PC-3 (cell line): ENCODE measurements at regions of chr1 and their contacts with region 1.

Region 1: DNA sequence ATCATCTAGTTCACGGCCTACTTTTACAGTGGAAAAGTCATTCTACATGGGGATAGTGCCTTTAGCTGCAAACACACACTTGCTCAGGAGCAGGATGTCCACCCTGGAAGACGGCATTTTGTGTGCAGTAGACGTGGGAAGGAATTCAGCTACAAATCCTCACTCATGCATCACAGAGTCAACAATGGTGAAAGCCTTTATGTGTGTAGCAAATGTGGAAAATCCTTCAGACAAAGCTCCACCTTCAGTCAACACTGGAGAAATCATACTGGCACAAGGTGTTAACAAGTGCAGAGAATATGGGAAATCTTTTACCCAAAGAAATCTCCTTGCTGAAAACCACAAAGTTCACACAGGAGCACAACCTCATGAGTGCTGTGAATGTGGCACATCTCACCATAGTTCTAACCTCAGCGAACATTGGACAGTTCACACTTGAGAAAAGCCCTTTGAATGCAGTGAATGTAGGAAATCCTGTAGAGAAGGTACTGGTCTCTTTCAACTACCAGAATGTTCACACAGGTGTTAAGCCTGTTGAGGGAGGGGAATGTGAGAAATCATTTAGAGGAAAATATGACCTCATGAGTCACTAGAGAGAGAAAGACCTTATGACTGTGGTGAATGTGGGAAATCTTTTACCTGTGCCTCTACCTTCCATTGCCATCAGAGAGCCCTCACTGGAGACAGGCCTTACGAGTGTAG is 101.8 kb downstream of the PTGS2 start:
- DNase-seq: peak; percentile 66
- ATAC-seq: peak; percentile 89
- H3K4me3 ChIP-seq: no peak overlapping the region
- H3K27ac ChIP-seq: peak overlapping the region; percentile 96
- H3K4me1 ChIP-seq: peaks cover 27% of the 10 kb centered on the region
- H3K27me3 ChIP-seq: no peaks in the 10 kb centered on the region
- CTCF ChIP-seq: no peak

Region 2: DNA sequence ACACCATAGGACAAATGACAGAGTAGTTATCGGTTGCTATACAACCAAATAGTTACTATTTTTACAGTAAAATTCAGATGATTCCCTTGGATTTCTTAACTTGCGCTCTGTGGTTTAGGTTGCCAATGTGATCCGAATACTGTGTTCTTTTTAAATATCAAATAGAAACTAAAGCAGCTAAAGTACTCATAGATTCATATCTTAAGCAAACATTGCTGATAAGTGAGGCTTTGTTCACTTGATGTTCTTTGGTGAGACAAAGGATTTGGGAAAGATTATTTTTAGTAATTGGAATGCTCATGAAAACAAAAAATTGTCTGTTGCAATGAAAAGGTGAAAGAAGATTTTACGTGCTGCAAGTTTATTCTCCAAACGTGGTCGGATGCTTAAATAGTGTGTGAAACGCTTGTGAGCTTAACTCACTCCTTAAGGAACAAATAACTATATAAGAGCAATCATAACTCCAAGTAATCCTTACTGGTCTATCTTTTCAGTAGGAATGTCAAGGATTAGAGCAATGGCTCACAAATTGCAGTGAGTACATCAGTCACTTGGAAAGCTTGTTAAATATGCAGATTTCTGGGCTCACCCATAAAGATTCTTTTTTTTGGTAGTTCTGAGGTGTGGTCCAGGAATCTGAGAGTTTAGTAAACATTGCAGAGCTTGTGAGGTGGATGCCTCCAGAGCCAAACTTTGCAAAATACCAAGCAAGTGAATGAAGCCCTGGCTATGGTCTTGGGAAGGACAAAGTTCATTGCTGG is 85.8 kb before region 1 on chr1:
- CTCF ChIA-PET with region 1: interaction called, 3 read pairs
- POLR2A ChIA-PET with region 1: no interaction called
- intact Hi-C with region 1: loop called (anchors 2 kb)
- DNase-seq: peak; percentile 74
- ATAC-seq: peak; percentile 77
- H3K4me3 ChIP-seq: peak overlapping the region; percentile 42
- H3K27ac ChIP-seq: peak overlapping the region; percentile 95
- H3K4me1 ChIP-seq: peaks cover 49% of the 10 kb centered on the region
- H3K27me3 ChIP-seq: no peaks in the 10 kb centered on the region
- CTCF ChIP-seq: no peak

Region 3: DNA sequence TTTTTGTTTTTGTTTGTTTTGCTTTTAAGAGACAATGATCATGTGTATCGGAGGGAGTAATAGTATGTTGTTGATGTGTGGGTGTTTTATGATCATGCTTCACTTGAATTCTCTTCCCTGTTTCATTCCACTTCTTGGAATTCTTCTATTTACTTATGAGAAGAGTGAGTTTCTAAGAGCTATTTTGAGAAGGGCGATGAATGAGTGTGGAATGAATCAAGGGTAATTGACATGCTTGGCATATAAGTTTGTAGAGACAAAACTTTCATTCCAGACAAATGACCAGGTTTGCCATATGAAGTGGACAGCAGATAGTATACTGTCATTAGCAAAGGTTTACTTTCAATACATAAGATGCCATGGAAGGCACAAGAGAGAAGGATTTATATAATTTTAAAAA is 75.3 kb before region 1 on chr1:
- CTCF ChIA-PET with region 1: no interaction called
- POLR2A ChIA-PET with region 1: no interaction called
- intact Hi-C with region 1: no loop called
- DNase-seq: peak; percentile 42
- ATAC-seq: peak; percentile 39; the same call in 1 of the 2 replicates
- H3K4me3 ChIP-seq: 0 out of 2 replicates have a peak overlapping the region, but pooled peaks have one; percentile 0
- H3K27ac ChIP-seq: peak overlapping the region; percentile 66
- H3K4me1 ChIP-seq: peaks cover 25% of the 10 kb centered on the region
- H3K27me3 ChIP-seq: no peaks in the 10 kb centered on the region
- CTCF ChIP-seq: no peak

Region 4: DNA sequence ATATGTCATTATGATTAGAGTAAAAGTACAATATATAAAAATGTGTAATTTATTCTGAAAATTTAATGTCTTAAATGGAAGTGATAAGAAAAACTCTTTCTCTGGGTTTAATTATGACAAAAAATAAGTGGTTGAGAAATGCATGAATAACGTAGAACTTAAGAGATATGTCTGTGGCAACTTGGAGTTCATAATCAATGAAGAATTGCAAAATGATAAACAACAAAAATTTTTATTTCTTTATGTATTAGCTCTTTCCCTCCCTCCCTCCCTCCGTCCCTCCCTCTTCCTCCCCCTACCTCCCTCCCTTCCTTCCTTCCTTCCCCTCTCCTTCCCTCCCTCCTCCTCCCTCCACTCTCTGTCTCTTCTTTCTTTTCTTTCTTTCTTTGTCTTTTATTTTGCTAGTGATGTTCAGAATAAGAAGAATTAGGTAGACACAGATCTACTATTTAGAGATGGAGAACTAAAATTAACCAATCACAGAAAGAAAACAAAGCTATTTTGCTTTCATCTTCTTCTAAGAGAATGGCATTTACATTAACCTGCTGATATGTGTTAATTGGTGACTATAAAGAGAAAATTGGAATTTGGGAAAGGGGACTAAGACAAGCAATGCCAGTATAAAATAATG is 21.2 kb before region 1 on chr1:
- CTCF ChIA-PET with region 1: no interaction called
- POLR2A ChIA-PET with region 1: no interaction called
- intact Hi-C with region 1: no loop called
- DNase-seq: no peak
- ATAC-seq: no peak
- H3K4me3 ChIP-seq: no peak overlapping the region
- H3K27ac ChIP-seq: no peak overlapping the region
- H3K4me1 ChIP-seq: 0 out of 2 replicates have a peak, but pooled peaks cover 4% of the 10 kb centered on the region
- H3K27me3 ChIP-seq: no peaks in the 10 kb centered on the region
- CTCF ChIP-seq: no peak